BJ (cell line): ENCODE measurements at regions of chr18 and their contacts with region 1.

Region 1: GRCh38 chr18:59029663-59030429 is 109.8 kb upstream of the SEC11C start:
- DNase-seq: no peak
- H3K4me3 ChIP-seq: no peak overlapping the region
- H3K27me3 ChIP-seq: no peaks in the 10 kb centered on the region
- CTCF ChIP-seq: no peak

Region 2: GRCh38 chr18:58947136-58947732 is 82.6 kb before region 1 on chr18:
- CTCF ChIA-PET with region 1: no interaction called
- POLR2A ChIA-PET with region 1: no interaction called
- DNase-seq: no peak
- H3K4me3 ChIP-seq: no peak overlapping the region
- H3K27me3 ChIP-seq: no peaks in the 10 kb centered on the region
- CTCF ChIP-seq: no peak

Region 3: DNA sequence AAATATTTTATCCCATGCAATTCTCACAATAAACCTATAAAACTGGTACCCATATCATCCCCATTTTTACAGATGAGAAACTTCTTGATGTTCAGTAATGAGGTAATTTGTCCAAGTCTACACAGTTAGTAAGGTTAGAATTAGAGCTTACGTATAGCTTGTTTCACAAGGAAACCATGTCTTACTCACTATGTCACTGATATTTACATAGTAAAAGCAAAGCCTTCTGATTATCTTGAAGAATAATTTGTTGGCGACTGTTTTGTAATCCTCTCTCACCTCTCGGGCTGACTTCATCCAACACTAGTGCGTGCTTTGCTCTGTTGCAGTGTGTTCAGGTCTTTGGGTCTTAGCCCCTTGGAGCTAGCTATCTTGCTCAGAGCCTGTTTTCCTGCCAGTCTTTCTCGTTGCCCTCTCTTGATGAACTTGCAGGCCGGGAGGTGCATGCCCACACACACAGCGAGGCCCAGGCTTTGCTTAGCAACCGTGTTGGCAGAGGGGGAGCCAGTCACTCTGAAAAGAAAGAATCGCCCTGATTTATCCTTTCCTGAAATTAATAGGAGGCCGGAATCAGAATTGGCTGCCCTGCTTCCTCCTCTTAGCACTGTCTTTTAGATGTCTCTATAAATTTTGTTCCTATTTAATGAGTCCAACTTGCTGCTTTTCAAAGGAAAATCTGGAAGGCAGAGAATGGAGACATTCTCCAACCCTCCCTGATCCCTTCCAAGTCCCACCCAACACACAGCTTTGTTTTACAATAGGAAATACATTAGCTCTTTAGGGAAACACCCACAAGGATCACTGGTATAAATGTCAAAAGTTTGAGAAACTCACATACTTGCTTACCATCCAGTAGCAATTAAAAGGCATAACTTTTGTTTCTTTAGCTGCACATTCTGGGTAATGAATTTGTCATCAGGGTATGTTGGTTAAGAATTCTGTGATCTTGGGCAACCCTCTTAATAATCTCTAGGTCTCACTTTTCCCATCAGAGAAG is 12.3 kb after region 1 on chr18:
- CTCF ChIA-PET with region 1: no interaction called
- POLR2A ChIA-PET with region 1: interaction called, 10 read pairs
- DNase-seq: peak; percentile 43
- H3K4me3 ChIP-seq: no peak overlapping the region
- H3K27me3 ChIP-seq: no peaks in the 10 kb centered on the region
- CTCF ChIP-seq: no peak